ENCODE measurements at regions of chr1 and their contacts with region 1.

Region 1: DNA sequence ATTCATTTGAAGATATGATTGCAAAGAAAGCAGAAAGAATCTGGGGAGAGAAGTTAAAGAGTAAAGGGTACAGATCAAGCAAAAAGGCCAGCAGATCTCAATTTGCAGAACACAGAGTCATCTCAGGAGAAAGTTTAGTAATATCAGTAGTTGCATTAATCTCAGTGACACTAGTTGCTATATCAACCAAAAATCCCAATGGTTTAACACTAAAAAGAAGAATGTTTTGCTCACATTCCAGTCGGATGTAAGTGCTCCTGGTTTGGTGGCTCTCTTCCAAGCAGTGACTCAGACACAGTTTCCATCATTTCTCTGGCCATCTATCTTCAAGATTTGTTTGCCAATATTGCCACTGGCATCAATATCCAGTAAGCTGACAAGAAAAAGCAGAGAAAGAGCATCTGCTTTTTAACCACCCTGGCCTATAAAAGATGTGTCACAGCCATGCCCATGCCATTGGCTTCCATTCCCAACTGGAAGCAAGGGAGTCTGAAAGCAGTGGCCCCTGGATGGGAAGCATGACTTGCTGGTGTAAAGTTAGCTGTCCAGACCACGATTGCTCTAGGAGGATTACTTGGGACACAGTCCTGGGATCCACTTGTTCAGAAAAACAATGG is 45.5 kb upstream of the AIM2 start:
- DNase-seq: no peak
- H3K4me3 ChIP-seq: no peak overlapping the region
- H3K27ac ChIP-seq: no peak overlapping the region
- H3K4me1 ChIP-seq: peaks cover 0 to 2% (median under 1%) of the 10 kb centered on the region in 4 experiments; a peak in 1 of 7 replicates
- H3K27me3 ChIP-seq: no peaks in the 10 kb centered on the region
- CTCF ChIP-seq: no peak
- EP300 ChIP-seq: no peak
- POLR2A ChIP-seq: no peak
- RAD21 ChIP-seq: no peak

Region 2: GRCh38 chr1:159132271-159132881 is 10.3 kb after region 1 on chr1:
- CTCF ChIA-PET with region 1: interaction called, 13 read pairs
- POLR2A ChIA-PET with region 1: no interaction called
- DNase-seq: peak in 1 of 2 experiments; percentile 80
- H3K4me3 ChIP-seq: no peak overlapping the region
- H3K27ac ChIP-seq: no peak overlapping the region
- H3K4me1 ChIP-seq: no peaks in the 10 kb centered on the region
- H3K27me3 ChIP-seq: no peaks in the 10 kb centered on the region; a peak in 1 of 7 replicates
- CTCF ChIP-seq: peak; percentile 64 to 73 (median 70)
- EP300 ChIP-seq: no peak
- POLR2A ChIP-seq: no peak
- RAD21 ChIP-seq: peak; percentile 83 to 85

Region 3: DNA sequence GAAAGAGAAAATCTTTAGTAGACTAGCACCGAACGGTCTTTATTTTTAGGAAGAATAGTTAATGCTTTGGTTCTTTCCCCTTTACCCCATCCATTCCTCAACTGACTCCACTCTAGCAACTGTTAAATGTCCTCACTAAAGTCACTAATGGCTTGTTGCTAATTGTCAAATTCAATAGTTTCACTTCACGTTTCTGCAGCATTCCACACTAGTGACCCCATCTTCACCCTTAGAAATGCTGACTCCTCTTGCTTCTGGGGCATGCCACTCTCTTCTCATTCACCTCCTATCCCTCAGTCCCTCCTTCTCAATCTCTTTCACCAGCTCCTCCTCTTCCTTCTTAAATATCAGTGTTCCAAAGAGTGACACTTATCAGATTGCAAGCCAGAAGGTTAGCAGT is 29.9 kb after region 1 on chr1:
- CTCF ChIA-PET with region 1: no interaction called
- POLR2A ChIA-PET with region 1: no interaction called
- DNase-seq: no peak
- H3K4me3 ChIP-seq: no peak overlapping the region
- H3K27ac ChIP-seq: no peak overlapping the region
- H3K4me1 ChIP-seq: no peaks in the 10 kb centered on the region
- H3K27me3 ChIP-seq: no peaks in the 10 kb centered on the region
- CTCF ChIP-seq: no peak
- EP300 ChIP-seq: no peak
- POLR2A ChIP-seq: no peak
- RAD21 ChIP-seq: no peak